ENCODE measurements at regions of chr12 and their contacts with region 1.

Region 1: GRCh38 chr12:57063991-57064685 is 14.2 kb upstream of the MYO1A start:
- DNase-seq: no peak
- ATAC-seq: no peak

Region 2: GRCh38 chr12:57008178-57008577 is 56.0 kb before region 1 on chr12:
- intact Hi-C with region 1: loop called (anchors 2 to 5 kb)
- DNase-seq: no peak
- ATAC-seq: peak in 1 of 2 donors; percentile 24

Region 3: GRCh38 chr12:57666897-57667296 is 602.8 kb after region 1 on chr12:
- intact Hi-C with region 1: no loop called
- DNase-seq: no peak
- ATAC-seq: no peak

Measured in left cardiac atrium (tissue), 4 donors.